A549 (cell line): ENCODE measurements at regions of chr10 and their contacts with region 1.

Region 1: GRCh38 chr10:12264204-12264940 is 68.4 kb downstream of the CDC123 start:
- DNase-seq: peak; percentile 76 to 85
- ATAC-seq: peak; percentile 90 to 92
- H3K4me3 ChIP-seq: peak overlapping the region; percentile 28; the same call in 2 of the 3 replicates
- H3K27ac ChIP-seq: peak overlapping the region; percentile 75 to 92
- H3K4me1 ChIP-seq: peaks cover 23% of the 10 kb centered on the region
- CTCF ChIP-seq: peak; percentile 97
- EP300 ChIP-seq: no peak; a peak in 1 of 5 replicates
- POLR2A ChIP-seq: no peak
- RAD21 ChIP-seq: peak; percentile 96 to 99

Region 2: GRCh38 chr10:11874542-11875177 is 389.7 kb before region 1 on chr10:
- CTCF ChIA-PET with region 1: no interaction called
- POLR2A ChIA-PET with region 1: no interaction called
- DNase-seq: peak in 1 of 2 experiments; percentile 65
- ATAC-seq: peak in 1 of 2 experiments; percentile 7; a peak in 4 of 6 replicates
- H3K4me3 ChIP-seq: no peak overlapping the region
- H3K27ac ChIP-seq: peak overlapping the region; percentile 82 to 92
- H3K4me1 ChIP-seq: peaks cover 35% of the 10 kb centered on the region
- CTCF ChIP-seq: no peak
- EP300 ChIP-seq: no peak
- POLR2A ChIP-seq: no peak
- RAD21 ChIP-seq: no peak

Region 3: DNA sequence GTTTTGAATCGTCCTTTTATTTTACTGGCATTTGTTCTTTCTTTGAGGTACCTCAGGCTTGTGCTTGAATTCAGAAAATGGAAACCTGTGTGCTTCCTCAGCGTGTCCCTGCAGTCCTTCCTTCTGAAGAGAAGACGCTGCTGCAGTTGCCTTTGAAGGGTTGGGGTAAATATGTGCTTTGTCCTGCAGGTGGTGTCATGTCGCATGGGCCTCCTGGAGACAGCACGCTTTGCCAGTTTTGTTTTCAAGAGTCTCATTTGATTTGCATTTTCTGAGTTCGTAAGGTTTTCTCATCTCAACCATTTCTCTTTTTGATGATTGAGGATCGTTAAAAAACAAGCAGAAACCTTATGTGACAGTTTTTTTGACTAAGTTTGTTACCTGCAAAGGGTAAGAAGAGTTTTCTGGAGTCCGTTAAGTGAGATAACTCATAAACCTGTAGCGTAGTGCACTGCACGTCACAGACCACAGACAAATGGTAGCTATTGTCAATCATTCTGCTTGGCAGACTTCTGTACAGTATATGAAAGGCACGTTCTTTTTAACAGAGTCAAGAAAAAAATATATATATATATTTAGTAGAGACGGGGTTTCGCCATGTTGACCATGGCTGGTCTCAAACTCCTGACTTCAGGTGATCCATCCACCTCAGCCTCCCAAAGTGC is 11.4 kb before region 1 on chr10:
- CTCF ChIA-PET with region 1: interaction called, 11 read pairs
- POLR2A ChIA-PET with region 1: no interaction called
- DNase-seq: peak; percentile 43 to 65
- ATAC-seq: peak; percentile 82 to 88
- H3K4me3 ChIP-seq: no peak overlapping the region
- H3K27ac ChIP-seq: no peak overlapping the region
- H3K4me1 ChIP-seq: no peaks in the 10 kb centered on the region
- CTCF ChIP-seq: peak; percentile 39; the same call in 2 of the 3 replicates
- EP300 ChIP-seq: no peak
- POLR2A ChIP-seq: no peak
- RAD21 ChIP-seq: peak; percentile 58 to 75

Region 4: DNA sequence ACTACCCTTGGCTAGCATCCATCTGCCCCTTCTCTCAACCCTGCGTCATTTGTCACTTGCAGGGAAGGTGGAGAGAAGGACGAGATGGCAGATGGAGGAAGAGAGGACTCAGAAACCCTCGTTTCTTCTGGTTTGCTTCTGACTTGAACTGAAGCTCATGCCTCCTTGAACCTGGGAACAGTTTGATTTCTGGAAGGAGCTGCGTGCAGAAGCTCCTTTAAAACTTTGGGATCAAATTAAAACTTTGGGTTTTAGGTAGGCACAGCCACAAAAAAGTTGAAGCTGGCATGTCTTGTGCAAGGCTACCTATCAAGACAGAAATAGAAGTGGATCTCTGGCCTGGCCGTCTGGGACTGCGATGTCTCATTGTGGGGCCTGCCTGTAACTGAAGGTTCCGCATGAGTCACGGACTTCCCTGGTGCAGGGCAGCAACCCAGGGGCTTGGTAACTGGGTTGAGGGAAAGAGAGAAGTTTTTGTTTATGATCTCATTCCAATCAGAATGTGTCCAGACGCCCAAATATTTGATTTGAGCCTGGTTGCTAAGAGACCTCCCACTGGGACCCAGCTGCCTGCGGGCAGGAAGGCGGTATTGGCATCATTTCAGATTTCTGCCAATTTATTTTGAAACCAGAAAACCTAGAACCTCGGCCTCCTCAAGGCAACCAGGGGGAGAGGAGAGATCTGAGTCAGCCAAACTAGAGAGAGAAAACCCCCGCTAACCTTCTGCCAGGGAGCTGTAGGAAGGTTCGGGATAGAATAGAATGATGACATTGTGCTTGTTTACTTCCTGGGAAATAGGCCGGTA is 69.2 kb after region 1 on chr10:
- CTCF ChIA-PET with region 1: interaction called, 11 read pairs
- POLR2A ChIA-PET with region 1: interaction called, 3 read pairs
- DNase-seq: peak; percentile 98
- ATAC-seq: peak; percentile 98 to 99
- H3K4me3 ChIP-seq: peak overlapping the region; percentile 12; the same call in 1 of the 3 replicates
- H3K27ac ChIP-seq: peak overlapping the region; percentile 91 to 93
- H3K4me1 ChIP-seq: peaks cover 45% of the 10 kb centered on the region
- CTCF ChIP-seq: no peak
- EP300 ChIP-seq: peak; percentile 87 to 89
- POLR2A ChIP-seq: no peak
- RAD21 ChIP-seq: peak; percentile 2 to 57; a peak in 4 of 5 replicates

Region 5: GRCh38 chr10:12375076-12375504 is 110.7 kb after region 1 on chr10:
- CTCF ChIA-PET with region 1: interaction called, 10 read pairs
- POLR2A ChIA-PET with region 1: no interaction called
- DNase-seq: no peak
- ATAC-seq: no peak
- H3K4me3 ChIP-seq: no peak overlapping the region
- H3K27ac ChIP-seq: no peak overlapping the region
- H3K4me1 ChIP-seq: no peaks in the 10 kb centered on the region
- CTCF ChIP-seq: no peak
- EP300 ChIP-seq: no peak
- POLR2A ChIP-seq: no peak
- RAD21 ChIP-seq: no peak

Region 6: GRCh38 chr10:12466704-12467305 is 202.4 kb after region 1 on chr10:
- CTCF ChIA-PET with region 1: interaction called, 16 read pairs
- POLR2A ChIA-PET with region 1: no interaction called
- DNase-seq: peak in 1 of 2 experiments; percentile 45
- ATAC-seq: peak; percentile 25 to 50; a peak in 4 of 6 replicates
- H3K4me3 ChIP-seq: no peak overlapping the region
- H3K27ac ChIP-seq: peak overlapping the region; percentile 11 to 71; a peak in 3 of 6 replicates
- H3K4me1 ChIP-seq: peaks cover 35% of the 10 kb centered on the region
- CTCF ChIP-seq: no peak
- EP300 ChIP-seq: no peak
- POLR2A ChIP-seq: no peak
- RAD21 ChIP-seq: no peak

Region 7: GRCh38 chr10:12703813-12704212 is 439.4 kb after region 1 on chr10:
- CTCF ChIA-PET with region 1: interaction called, 76 read pairs
- POLR2A ChIA-PET with region 1: no interaction called
- DNase-seq: peak in 1 of 2 experiments; percentile 57
- ATAC-seq: 0 out of 6 replicates have a peak, but pooled peaks of 1 of the 2 experiments have one; percentile 17
- H3K4me3 ChIP-seq: no peak overlapping the region
- H3K27ac ChIP-seq: peak overlapping the region; percentile 82 to 94
- H3K4me1 ChIP-seq: peaks cover 75% of the 10 kb centered on the region
- CTCF ChIP-seq: no peak
- EP300 ChIP-seq: peak; percentile 23 to 61; a peak in 2 of 5 replicates
- POLR2A ChIP-seq: no peak
- RAD21 ChIP-seq: peak in 1 of 2 experiments; percentile 19; a peak in 1 of 5 replicates

Region 8: GRCh38 chr10:12902135-12902572 is 637.8 kb after region 1 on chr10:
- CTCF ChIA-PET with region 1: interaction called, 10 read pairs
- POLR2A ChIA-PET with region 1: no interaction called
- DNase-seq: peak; percentile 61 to 63
- ATAC-seq: peak; percentile 56 to 76; a peak in 3 of 6 replicates
- H3K4me3 ChIP-seq: no peak overlapping the region
- H3K27ac ChIP-seq: no peak overlapping the region
- H3K4me1 ChIP-seq: no peaks in the 10 kb centered on the region
- CTCF ChIP-seq: peak; percentile 80
- EP300 ChIP-seq: no peak
- POLR2A ChIP-seq: no peak
- RAD21 ChIP-seq: peak; percentile 81 to 82